ENCODE measurements at regions of chr18 and their contacts with region 1.

Region 1: GRCh38 chr18:76875390-76876325 is 53.3 kb downstream of the ZNF236 start:
- DNase-seq: no peak
- ATAC-seq: peak in 2 of 4 donors; percentile 46 to 63
- H3K4me3 ChIP-seq: no peak overlapping the region
- H3K27ac ChIP-seq: no peak overlapping the region
- H3K4me1 ChIP-seq: peaks cover 0 to 3% (median 0%) of the 10 kb centered on the region in 12 donors
- H3K27me3 ChIP-seq: no peaks in the 10 kb centered on the region
- CTCF ChIP-seq: peak; percentile 30 to 69 (median 54)
- POLR2A ChIP-seq: no peak

Region 2: GRCh38 chr18:76056471-76057110 is 819.1 kb before region 1 on chr18:
- intact Hi-C with region 1: no loop called
- DNase-seq: peak in 2 of 5 donors; percentile 33 to 45
- ATAC-seq: peak; percentile 38 to 86 (median 47)
- H3K4me3 ChIP-seq: peak overlapping the region in 2 of 12 donors; percentile 15 to 16
- H3K27ac ChIP-seq: no peak overlapping the region
- H3K4me1 ChIP-seq: no peaks in the 10 kb centered on the region
- H3K27me3 ChIP-seq: peaks cover 0 to 5% (median 0%) of the 10 kb centered on the region in 9 donors
- CTCF ChIP-seq: no peak
- POLR2A ChIP-seq: no peak

Region 3: GRCh38 chr18:76741365-76741764 is 134.3 kb before region 1 on chr18:
- intact Hi-C with region 1: no loop called
- DNase-seq: no peak
- ATAC-seq: no peak
- H3K4me3 ChIP-seq: no peak overlapping the region
- H3K27ac ChIP-seq: no peak overlapping the region
- H3K4me1 ChIP-seq: peaks cover 0 to 10% (median 0%) of the 10 kb centered on the region in 12 donors
- H3K27me3 ChIP-seq: peaks cover 0 to 4% (median 0%) of the 10 kb centered on the region in 9 donors
- CTCF ChIP-seq: no peak
- POLR2A ChIP-seq: no peak

Region 4: GRCh38 chr18:76948345-76948744 is 72.7 kb after region 1 on chr18:
- intact Hi-C with region 1: loop called in 1 of 10 experiments (anchors 2 kb)
- DNase-seq: no peak
- ATAC-seq: no peak
- H3K4me3 ChIP-seq: no peak overlapping the region
- H3K27ac ChIP-seq: no peak overlapping the region
- H3K4me1 ChIP-seq: peaks cover 0 to 7% (median 5%) of the 10 kb centered on the region in 12 donors
- H3K27me3 ChIP-seq: no peaks in the 10 kb centered on the region
- CTCF ChIP-seq: no peak
- POLR2A ChIP-seq: no peak

Measured in heart left ventricle (tissue), 16 donors.